ENCODE measurements at regions of chr9 and their contacts with region 1.

Region 1: GRCh38 chr9:2145746-2146145 is 130.6 kb downstream of the SMARCA2 start:
- DNase-seq: no peak
- H3K4me3 ChIP-seq: no peak overlapping the region
- H3K27ac ChIP-seq: no peak overlapping the region
- H3K4me1 ChIP-seq: no peaks in the 10 kb centered on the region
- CTCF ChIP-seq: no peak

Region 2: DNA sequence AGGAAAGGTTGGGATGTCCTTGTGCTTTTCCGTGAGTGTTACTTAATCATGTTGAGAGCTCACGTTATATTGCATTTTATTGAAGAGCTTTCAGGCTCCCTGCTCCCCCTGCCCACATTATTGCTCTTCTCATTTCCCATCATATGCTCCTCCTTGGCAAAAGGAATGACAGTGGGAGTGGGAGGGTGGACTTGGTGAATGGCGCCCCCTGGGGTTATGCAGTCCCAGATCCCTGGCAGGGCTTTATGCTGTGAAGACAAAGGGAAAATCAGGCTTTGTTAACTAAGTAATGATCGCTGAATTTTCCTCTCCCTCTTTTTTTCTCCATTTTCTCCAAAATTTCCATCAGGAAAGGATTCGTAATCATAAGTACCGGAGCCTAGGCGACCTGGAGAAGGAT is 36.0 kb after region 1 on chr9:
- CTCF ChIA-PET with region 1: no interaction called
- POLR2A ChIA-PET with region 1: interaction called, 4 read pairs
- intact Hi-C with region 1: loop called (anchors 2 kb)
- DNase-seq: peak; percentile 24
- H3K4me3 ChIP-seq: no peak overlapping the region
- H3K27ac ChIP-seq: no peak overlapping the region
- H3K4me1 ChIP-seq: no peaks in the 10 kb centered on the region
- CTCF ChIP-seq: peak; percentile 85

Measured in OCI-LY7 (cell line).